Adrenal gland (tissue), 19 donors: ENCODE measurements at regions of chr14 and their contacts with region 1.

Region 1: GRCh38 chr14:33839193-33840076 is 111.4 kb downstream of the EGLN3 start:
- DNase-seq: peak; percentile 30 to 71 (median 46)
- H3K4me3 ChIP-seq: no peak overlapping the region
- H3K27ac ChIP-seq: no peak overlapping the region
- H3K4me1 ChIP-seq: no peaks in the 10 kb centered on the region
- H3K27me3 ChIP-seq: no peaks in the 10 kb centered on the region
- CTCF ChIP-seq: peak; percentile 50 to 75 (median 70)
- POLR2A ChIP-seq: no peak

Region 2: DNA sequence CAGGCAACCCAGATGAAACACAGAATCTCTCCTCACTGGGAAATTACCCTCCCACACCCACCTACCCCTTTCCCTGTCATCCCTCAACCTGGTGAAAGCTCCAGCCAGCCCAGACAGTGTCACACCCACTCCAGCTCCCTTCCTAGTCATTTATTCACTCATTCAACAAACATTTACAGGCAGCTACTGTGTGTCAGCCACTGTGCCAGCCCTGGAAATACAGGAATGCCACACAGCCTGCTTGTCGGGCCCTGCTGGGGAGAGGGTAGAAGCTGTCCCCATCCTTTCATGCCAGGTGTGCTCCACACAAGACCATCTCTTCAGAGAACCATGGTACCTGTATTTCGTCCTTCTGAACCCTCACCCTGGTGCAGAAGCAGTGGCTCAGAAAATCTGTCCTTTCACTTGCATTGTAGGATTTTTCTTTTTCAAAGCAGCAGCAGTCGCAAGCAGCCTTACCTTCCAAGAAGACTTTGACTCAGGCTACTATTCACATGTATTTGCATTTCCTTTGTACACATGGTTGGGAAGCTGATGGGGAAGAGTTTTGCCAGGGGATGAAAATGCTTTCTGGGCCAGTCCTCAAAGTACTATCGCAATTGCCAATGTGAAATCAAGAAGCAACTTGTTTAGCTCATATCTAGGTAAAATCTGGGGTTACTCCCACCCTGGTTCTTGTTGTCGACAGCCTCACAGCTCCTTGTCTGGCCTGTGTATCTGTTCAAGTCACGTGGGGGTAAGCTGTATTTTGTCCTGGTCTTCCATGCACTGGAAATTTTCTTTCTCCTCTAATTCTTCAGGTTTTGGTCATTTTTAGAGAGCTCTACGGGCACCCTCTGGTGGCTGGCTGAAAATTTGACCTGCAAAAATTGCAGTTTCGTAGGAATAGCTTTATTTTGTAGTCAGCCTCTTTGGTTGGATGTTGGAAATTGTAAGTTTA is 258.9 kb after region 1 on chr14:
- intact Hi-C with region 1: loop called (anchors 5 to 10 kb)
- DNase-seq: peak; percentile 21 to 58 (median 25)
- H3K4me3 ChIP-seq: no peak overlapping the region
- H3K27ac ChIP-seq: no peak overlapping the region
- H3K4me1 ChIP-seq: no peaks in the 10 kb centered on the region
- H3K27me3 ChIP-seq: no peaks in the 10 kb centered on the region
- CTCF ChIP-seq: peak; percentile 45 to 67 (median 60)
- POLR2A ChIP-seq: no peak

Region 3: GRCh38 chr14:34227834-34228649 is 388.6 kb after region 1 on chr14:
- intact Hi-C with region 1: loop called (anchors 2 to 10 kb)
- DNase-seq: peak; percentile 50 to 76 (median 68)
- H3K4me3 ChIP-seq: no peak overlapping the region
- H3K27ac ChIP-seq: no peak overlapping the region
- H3K4me1 ChIP-seq: no peaks in the 10 kb centered on the region
- H3K27me3 ChIP-seq: no peaks in the 10 kb centered on the region
- CTCF ChIP-seq: peak; percentile 62 to 74 (median 68)
- POLR2A ChIP-seq: no peak

Region 4: GRCh38 chr14:34237081-34237480 is 397.6 kb after region 1 on chr14:
- intact Hi-C with region 1: loop called in 1 of 2 experiments (anchors 10 kb)
- DNase-seq: no peak
- H3K4me3 ChIP-seq: no peak overlapping the region
- H3K27ac ChIP-seq: no peak overlapping the region
- H3K4me1 ChIP-seq: no peaks in the 10 kb centered on the region
- H3K27me3 ChIP-seq: no peaks in the 10 kb centered on the region
- CTCF ChIP-seq: no peak
- POLR2A ChIP-seq: no peak

Region 5: DNA sequence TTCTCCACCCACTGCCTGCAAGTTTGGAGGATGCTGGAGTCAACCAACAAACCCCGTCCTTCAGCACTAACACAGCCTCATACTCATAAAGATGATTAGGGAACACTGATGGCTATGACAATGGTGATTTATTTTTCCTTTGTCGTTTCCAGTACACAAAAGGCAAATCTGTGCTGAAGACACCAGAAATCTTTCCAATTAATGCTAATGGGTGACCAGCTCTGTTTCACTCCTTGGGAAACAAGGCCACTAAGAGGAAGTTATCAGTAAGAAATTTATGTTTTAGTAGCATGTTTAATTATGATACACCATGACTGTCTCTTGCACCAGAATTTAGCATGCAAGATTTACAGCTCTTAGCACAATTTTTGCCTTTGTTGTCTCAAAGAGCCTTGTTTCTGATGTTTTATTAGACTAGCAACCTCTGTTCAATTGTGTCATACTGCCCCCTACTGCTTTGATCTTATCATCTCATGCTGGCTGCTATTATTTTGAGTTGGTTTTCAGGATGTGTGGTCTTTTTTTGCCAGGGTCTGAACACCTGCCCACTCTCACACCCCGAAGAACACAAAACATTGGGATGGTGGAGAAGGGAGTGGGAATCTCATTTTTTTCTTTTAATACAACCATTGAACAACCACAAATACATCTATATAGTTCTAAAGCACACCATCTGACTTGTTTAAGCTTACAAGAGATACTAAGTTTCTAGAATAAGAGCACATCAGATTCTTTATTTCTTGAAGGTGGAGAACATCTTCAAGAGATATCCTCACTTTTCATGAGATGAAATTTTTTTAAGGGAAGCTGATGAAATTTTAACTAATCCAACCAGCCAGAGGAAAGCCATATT is 461.7 kb after region 1 on chr14:
- intact Hi-C with region 1: loop called in 1 of 2 experiments (anchors 10 kb)
- DNase-seq: peak in 2 of 7 donors; percentile 11 to 19
- H3K4me3 ChIP-seq: no peak overlapping the region
- H3K27ac ChIP-seq: no peak overlapping the region
- H3K4me1 ChIP-seq: no peaks in the 10 kb centered on the region
- H3K27me3 ChIP-seq: no peaks in the 10 kb centered on the region
- CTCF ChIP-seq: peak in 5 of 6 experiments; percentile 18 to 51 (median 48)
- POLR2A ChIP-seq: no peak